ENCODE measurements at regions of chr3 and their contacts with region 1.

Region 1: GRCh38 chr3:74673326-74673725 is 58.9 kb upstream of the CNTN3 start:
- DNase-seq: no peak
- ATAC-seq: no peak
- H3K4me3 ChIP-seq: no peak overlapping the region
- H3K27ac ChIP-seq: no peak overlapping the region
- H3K4me1 ChIP-seq: no peaks in the 10 kb centered on the region
- H3K27me3 ChIP-seq: no peaks in the 10 kb centered on the region
- CTCF ChIP-seq: no peak
- POLR2A ChIP-seq: no peak
- RAD21 ChIP-seq: no peak

Region 2: DNA sequence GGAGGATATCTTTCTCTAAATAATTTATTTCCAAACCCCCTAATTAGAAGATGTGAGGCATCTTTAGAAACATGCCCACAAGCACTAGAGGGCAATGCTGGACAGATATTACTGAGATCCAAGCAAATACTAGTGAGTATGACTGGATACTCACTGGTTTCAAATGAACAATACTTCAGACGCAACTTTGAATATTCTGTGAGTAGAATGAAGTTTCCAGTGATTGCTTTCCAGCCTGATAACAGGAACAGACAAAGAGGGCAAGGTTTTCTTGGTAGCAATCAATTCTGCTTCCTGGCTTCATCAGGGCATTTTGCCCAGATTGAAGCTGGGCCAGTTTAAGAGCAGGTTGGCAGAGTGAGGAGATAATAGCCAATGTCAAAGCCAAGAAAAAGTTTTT is 606.0 kb before region 1 on chr3:
- CTCF ChIA-PET with region 1: no interaction called
- POLR2A ChIA-PET with region 1: no interaction called
- dilution Hi-C with region 1: no loop called
- in situ Hi-C with region 1: no loop called
- intact Hi-C with region 1: loop called (anchors 5 kb)
- DNase-seq: peak; percentile 32
- ATAC-seq: peak; percentile 86
- H3K4me3 ChIP-seq: no peak overlapping the region
- H3K27ac ChIP-seq: no peak overlapping the region
- H3K4me1 ChIP-seq: no peaks in the 10 kb centered on the region
- H3K27me3 ChIP-seq: no peaks in the 10 kb centered on the region
- CTCF ChIP-seq: peak; percentile 55
- POLR2A ChIP-seq: no peak
- RAD21 ChIP-seq: peak; percentile 62

Region 3: GRCh38 chr3:74537164-74537563 is 136.2 kb before region 1 on chr3:
- CTCF ChIA-PET with region 1: no interaction called
- POLR2A ChIA-PET with region 1: no interaction called
- dilution Hi-C with region 1: no loop called
- in situ Hi-C with region 1: no loop called
- intact Hi-C with region 1: no loop called
- DNase-seq: peak; percentile 80
- ATAC-seq: peak; percentile 22
- H3K4me3 ChIP-seq: no peak overlapping the region
- H3K27ac ChIP-seq: no peak overlapping the region
- H3K4me1 ChIP-seq: peaks cover 6% of the 10 kb centered on the region; the same call in 1 of the 2 replicates
- H3K27me3 ChIP-seq: no peaks in the 10 kb centered on the region
- CTCF ChIP-seq: no peak
- POLR2A ChIP-seq: no peak
- RAD21 ChIP-seq: no peak

Region 4: GRCh38 chr3:74824366-74824765 is 151.0 kb after region 1 on chr3:
- CTCF ChIA-PET with region 1: no interaction called
- POLR2A ChIA-PET with region 1: no interaction called
- dilution Hi-C with region 1: no loop called
- in situ Hi-C with region 1: no loop called
- intact Hi-C with region 1: no loop called
- DNase-seq: no peak
- ATAC-seq: no peak
- H3K4me3 ChIP-seq: no peak overlapping the region
- H3K27ac ChIP-seq: no peak overlapping the region
- H3K4me1 ChIP-seq: no peaks in the 10 kb centered on the region
- H3K27me3 ChIP-seq: no peaks in the 10 kb centered on the region
- CTCF ChIP-seq: no peak
- POLR2A ChIP-seq: no peak
- RAD21 ChIP-seq: no peak

Region 5: DNA sequence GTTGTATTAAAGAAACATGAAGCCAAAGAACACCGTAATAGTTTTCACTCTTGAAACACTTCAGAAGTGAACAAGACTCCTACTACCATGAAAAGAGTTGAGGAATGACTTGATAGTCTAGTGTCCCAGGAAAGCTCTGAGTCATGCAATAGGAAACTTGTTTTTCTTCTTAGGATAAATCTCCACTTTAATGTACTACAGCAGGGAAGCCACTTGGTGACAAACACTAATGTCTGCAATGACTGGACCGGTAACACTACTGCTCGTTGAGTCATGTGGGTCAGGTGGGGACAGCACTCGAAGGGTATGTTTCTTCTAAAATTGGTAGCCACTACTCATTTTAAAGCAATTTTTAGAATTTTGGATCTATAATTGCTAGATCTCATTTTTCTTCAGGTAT is 232.9 kb after region 1 on chr3:
- CTCF ChIA-PET with region 1: no interaction called
- POLR2A ChIA-PET with region 1: no interaction called
- dilution Hi-C with region 1: no loop called
- in situ Hi-C with region 1: no loop called
- intact Hi-C with region 1: no loop called
- DNase-seq: no peak
- ATAC-seq: no peak
- H3K4me3 ChIP-seq: no peak overlapping the region
- H3K27ac ChIP-seq: no peak overlapping the region
- H3K4me1 ChIP-seq: no peaks in the 10 kb centered on the region
- H3K27me3 ChIP-seq: no peaks in the 10 kb centered on the region
- CTCF ChIP-seq: no peak
- POLR2A ChIP-seq: no peak
- RAD21 ChIP-seq: no peak

Region 6: DNA sequence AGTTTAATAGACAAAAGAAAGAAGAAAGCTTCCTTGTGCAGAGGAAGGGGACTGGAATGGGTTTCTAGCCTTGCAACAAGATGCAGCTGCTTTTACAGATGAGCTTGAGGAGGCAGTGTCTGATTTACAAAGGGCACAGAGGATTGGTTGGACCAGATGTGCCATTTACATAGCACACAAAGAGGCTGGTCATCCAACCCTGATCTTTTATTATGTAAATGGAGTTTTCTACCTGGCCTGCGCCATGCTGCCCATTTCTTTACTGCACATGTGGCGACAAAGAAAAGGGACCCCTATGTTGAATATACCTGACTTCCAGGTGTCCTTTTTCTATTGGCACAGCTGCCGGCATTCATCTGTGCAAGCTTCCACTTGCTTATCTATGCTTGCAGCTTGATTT is 581.4 kb after region 1 on chr3:
- CTCF ChIA-PET with region 1: no interaction called
- POLR2A ChIA-PET with region 1: no interaction called
- dilution Hi-C with region 1: no loop called
- in situ Hi-C with region 1: no loop called
- intact Hi-C with region 1: no loop called
- DNase-seq: no peak
- ATAC-seq: no peak
- H3K4me3 ChIP-seq: no peak overlapping the region
- H3K27ac ChIP-seq: no peak overlapping the region
- H3K4me1 ChIP-seq: no peaks in the 10 kb centered on the region
- H3K27me3 ChIP-seq: no peaks in the 10 kb centered on the region
- CTCF ChIP-seq: no peak
- POLR2A ChIP-seq: no peak
- RAD21 ChIP-seq: no peak